Activated T-helper 1 cell treated with anti-CD3 and anti-CD28 coated beads, Interleukin-12 subunit alpha, Interleukin-12 subunit beta, Interleukin-2, Interleukin-4 antibody, amounts not matched to agents 30 ng/mL and 10 ng/mL and 1 ng/mL, durations not matched to agents 14 hours and 24 hours and 36 hours (primary cell): ENCODE measurements at regions of chr4 and their contacts with region 1.

Region 1: DNA sequence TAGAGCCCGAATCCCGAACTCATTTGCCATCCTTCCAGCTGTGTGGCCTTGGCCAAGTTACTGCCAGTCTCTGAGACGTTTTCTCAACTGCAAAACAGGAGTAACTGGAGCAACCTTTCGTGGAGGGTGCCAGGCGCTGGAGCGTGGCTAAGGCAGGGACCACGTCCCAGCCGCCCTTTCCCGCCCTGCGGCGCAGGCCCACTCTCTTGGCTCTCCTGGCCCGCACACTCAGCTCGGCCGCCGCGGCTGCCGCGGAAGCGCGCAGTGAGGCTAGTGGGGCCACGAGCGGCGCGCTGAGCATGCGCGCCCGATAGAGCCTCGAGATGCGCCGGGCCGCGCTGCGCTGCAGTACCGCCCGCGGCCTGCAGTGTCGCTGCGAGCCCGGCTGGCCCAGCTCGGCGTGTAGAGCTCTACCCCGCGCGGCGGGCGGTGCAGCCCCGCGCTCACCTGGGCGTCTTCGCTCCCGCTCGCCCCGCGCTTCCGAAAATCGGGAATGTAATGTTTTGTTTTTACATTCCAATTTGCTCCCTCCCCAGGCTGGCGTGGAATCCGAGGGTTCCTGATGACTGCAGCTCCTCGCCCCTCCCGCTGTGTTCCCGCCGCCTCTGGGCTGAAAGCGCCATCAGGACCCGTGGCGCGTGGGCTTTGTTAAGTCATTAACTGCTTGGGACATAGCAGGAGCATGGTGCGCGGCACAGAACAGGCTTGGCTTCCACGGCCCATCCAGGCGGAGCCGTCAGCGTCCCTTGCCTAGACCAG is 4.0 kb upstream of the ZNF518B start:
- DNase-seq: peak; percentile 76
- H3K4me3 Mint-ChIP-seq: peak overlapping the region; percentile 77
- H3K27ac Mint-ChIP-seq: no peak overlapping the region
- H3K4me1 Mint-ChIP-seq: peaks cover 34% of the 10 kb centered on the region
- H3K27me3 Mint-ChIP-seq: peaks cover 33% of the 10 kb centered on the region

Region 2: GRCh38 chr4:10018818-10019461 is 442.3 kb before region 1 on chr4:
- intact Hi-C with region 1: loop called (anchors 2 kb)
- DNase-seq: peak; percentile 94
- H3K4me3 Mint-ChIP-seq: peak overlapping the region; percentile 87
- H3K27ac Mint-ChIP-seq: peak overlapping the region; percentile 95
- H3K4me1 Mint-ChIP-seq: peaks cover 17% of the 10 kb centered on the region
- H3K27me3 Mint-ChIP-seq: peaks cover 5% of the 10 kb centered on the region

Region 3: GRCh38 chr4:10116580-10117358 is 344.5 kb before region 1 on chr4 and contains the start of gene WDR1:
- intact Hi-C with region 1: loop called (anchors 1 kb)
- DNase-seq: peak; percentile 91
- H3K4me3 Mint-ChIP-seq: peak within 1 kb of the TSS; percentile 97
- H3K27ac Mint-ChIP-seq: peak within 1 kb of the TSS; percentile 95
- H3K4me1 Mint-ChIP-seq: peaks cover 86% of the 10 kb centered on the region
- H3K27me3 Mint-ChIP-seq: no peaks in the 10 kb centered on the region
- total RNA-seq, gene WDR1: 449 and 453 TPM in 2 replicates

Region 4: DNA sequence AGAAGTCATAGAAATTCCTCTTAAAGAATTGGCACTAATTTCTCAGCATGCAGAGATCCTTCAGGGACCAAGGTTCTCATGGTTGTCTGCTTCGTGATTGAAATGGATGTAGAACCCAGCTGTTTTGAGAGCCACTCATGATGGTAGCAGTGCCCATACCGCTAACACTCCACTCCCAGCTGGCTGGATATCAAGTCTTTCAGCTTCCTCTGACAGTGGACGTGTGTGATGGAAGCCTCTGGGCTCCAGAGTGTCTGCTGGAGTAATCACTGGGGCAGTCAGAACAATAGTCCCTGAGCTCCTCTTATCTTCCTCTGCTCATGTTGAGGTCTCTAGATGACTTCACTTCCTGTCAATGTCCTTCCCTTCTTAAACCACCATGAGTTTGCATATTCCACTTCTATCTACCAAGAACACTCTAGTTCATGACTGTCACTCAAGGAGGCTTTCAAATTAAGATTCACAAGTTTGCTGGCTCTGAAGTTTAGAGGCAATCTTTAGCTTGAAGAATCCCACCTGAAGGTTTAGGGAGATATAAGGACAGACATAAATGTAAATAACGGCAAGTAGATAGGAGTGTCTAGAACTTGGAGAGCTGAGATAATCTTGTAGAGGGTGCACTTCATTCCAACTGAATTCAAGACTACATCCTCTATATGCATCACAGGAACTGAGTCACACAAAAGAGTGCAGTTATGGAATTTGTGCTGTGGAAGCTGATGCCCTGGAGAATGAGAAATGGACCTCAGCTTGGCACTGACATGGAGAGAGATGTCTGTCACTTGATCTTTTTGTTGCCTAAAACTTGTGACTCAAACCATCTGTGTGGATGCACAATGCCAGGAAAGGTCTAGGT is 280.1 kb before region 1 on chr4:
- intact Hi-C with region 1: loop called (anchors 1 kb)
- DNase-seq: peak; percentile 21
- H3K4me3 Mint-ChIP-seq: peak overlapping the region; percentile 63
- H3K27ac Mint-ChIP-seq: peak overlapping the region; percentile 88
- H3K4me1 Mint-ChIP-seq: peaks cover 43% of the 10 kb centered on the region
- H3K27me3 Mint-ChIP-seq: peaks cover 7% of the 10 kb centered on the region

Region 5: GRCh38 chr4:10554694-10555093 is 93.4 kb after region 1 on chr4:
- intact Hi-C with region 1: loop called (anchors 1 kb)
- DNase-seq: peak; percentile 22
- H3K4me3 Mint-ChIP-seq: no peak overlapping the region
- H3K27ac Mint-ChIP-seq: no peak overlapping the region
- H3K4me1 Mint-ChIP-seq: no peaks in the 10 kb centered on the region
- H3K27me3 Mint-ChIP-seq: peaks cover 4% of the 10 kb centered on the region

Region 6: DNA sequence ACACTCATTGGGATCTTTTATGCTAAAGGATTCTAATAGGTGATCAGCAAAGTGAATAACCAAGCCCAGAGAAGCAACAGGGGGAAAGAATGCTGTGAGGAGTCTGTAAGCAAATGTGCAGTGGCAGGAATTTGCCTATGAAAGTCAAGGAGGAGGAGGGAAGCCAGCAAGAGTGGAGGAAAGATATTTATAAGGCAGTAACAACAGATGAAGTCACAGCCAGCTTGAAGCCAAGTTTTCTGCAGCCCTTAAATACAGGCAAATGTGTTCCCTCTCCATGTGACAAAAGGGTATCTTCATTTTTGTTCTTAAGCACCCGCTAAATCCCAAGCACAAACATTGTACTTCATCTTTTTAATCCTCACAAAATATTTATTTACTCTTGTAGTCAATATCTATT is 498.3 kb after region 1 on chr4:
- intact Hi-C with region 1: loop called (anchors 10 kb)
- DNase-seq: no peak
- H3K4me3 Mint-ChIP-seq: no peak overlapping the region
- H3K27ac Mint-ChIP-seq: no peak overlapping the region
- H3K4me1 Mint-ChIP-seq: peaks cover 13% of the 10 kb centered on the region
- H3K27me3 Mint-ChIP-seq: peaks cover 3% of the 10 kb centered on the region